PC-3 (cell line): ENCODE measurements at regions of chr1 and their contacts with region 1.

Region 1: DNA sequence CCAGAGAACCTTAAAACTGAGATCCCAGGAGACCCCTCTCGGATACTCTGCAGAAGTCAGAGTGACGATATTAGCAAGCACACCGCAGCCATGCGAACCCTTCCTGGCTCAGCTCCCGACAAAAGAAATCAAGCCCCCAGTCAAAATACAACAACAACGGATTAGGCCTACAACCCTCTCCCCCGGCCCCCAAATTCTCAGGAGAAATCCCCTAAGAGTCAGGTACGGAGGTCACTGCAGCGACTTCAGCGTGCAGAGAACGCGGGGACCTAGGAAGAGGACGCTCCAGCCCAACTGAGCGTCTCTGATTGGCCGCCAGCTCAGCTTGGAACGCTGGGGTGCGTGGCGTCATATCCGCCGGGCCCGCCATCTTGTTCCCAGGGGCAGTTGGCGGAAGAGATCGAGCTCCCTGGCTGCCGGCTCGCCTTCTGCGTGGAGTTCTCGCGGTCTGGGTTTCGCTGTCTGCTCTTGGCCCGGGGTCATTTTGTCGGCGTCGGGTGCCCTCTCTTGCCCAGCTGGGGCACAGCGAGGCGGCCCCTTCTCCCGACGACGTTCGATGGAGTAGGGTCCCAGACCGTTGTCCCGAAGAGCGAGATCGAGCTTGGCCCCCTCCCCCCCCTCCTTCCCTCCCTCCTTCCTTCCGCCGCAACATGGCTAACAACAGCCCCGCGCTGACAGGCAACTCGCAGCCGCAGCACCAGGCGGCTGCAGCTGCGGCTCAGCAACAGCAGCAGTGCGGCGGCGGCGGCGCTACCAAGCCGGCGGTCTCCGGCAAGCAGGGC is at the start of gene PRPF38B:
- DNase-seq: peak; percentile 90
- ATAC-seq: peak; percentile 93
- H3K4me3 ChIP-seq: peak within 1 kb of the TSS; percentile 100
- H3K27ac ChIP-seq: peak within 1 kb of the TSS; percentile 82
- H3K4me1 ChIP-seq: peaks cover 17% of the 10 kb centered on the region
- H3K27me3 ChIP-seq: no peaks in the 10 kb centered on the region
- CTCF ChIP-seq: no peak
- total RNA-seq, gene PRPF38B: 20.2 and 21.9 TPM in 2 replicates

Region 2: GRCh38 chr1:108199781-108200570 is 492.2 kb before region 1 on chr1 and contains the start of gene SLC25A24:
- CTCF ChIA-PET with region 1: no interaction called
- POLR2A ChIA-PET with region 1: no interaction called
- intact Hi-C with region 1: no loop called
- DNase-seq: peak; percentile 79
- ATAC-seq: peak; percentile 92
- H3K4me3 ChIP-seq: peak within 1 kb of the TSS; percentile 97
- H3K27ac ChIP-seq: peak within 1 kb of the TSS; percentile 59
- H3K4me1 ChIP-seq: peaks cover 19% of the 10 kb centered on the region
- H3K27me3 ChIP-seq: no peaks in the 10 kb centered on the region
- CTCF ChIP-seq: no peak
- total RNA-seq, gene SLC25A24: 30.3 and 33.4 TPM in 2 replicates

Region 3: GRCh38 chr1:108719656-108720435 is 27.7 kb after region 1 on chr1:
- CTCF ChIA-PET with region 1: no interaction called
- POLR2A ChIA-PET with region 1: no interaction called
- intact Hi-C with region 1: loop called (anchors 1 kb)
- DNase-seq: peak; percentile 89
- ATAC-seq: peak; percentile 98
- H3K4me3 ChIP-seq: peak overlapping the region; percentile 37; the same call in 1 of the 2 replicates
- H3K27ac ChIP-seq: peak overlapping the region; percentile 84
- H3K4me1 ChIP-seq: peaks cover 22% of the 10 kb centered on the region
- H3K27me3 ChIP-seq: no peaks in the 10 kb centered on the region
- CTCF ChIP-seq: no peak

Region 4: DNA sequence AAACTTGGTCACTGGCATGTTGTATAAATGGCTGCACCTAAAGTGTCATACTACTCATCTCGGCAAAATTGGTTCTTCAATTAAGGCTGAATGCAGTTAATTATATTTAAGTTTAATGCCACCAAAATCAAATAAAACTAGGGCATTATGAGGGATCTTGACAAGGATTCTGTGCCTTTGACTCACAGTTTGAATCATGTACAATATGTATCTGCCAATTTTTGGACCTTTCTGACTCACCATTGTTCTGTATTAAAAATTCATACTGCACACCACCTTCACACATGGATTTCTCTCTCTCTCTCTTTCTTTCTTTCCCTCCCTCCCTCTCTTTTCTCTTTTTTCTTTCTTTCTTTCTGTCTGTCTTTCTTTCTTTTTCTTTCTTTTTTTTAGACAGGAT is 40.3 kb after region 1 on chr1:
- CTCF ChIA-PET with region 1: no interaction called
- POLR2A ChIA-PET with region 1: no interaction called
- intact Hi-C with region 1: no loop called
- DNase-seq: peak; percentile 61
- ATAC-seq: peak; percentile 79
- H3K4me3 ChIP-seq: no peak overlapping the region
- H3K27ac ChIP-seq: no peak overlapping the region
- H3K4me1 ChIP-seq: no peaks in the 10 kb centered on the region
- H3K27me3 ChIP-seq: no peaks in the 10 kb centered on the region
- CTCF ChIP-seq: no peak

Region 5: DNA sequence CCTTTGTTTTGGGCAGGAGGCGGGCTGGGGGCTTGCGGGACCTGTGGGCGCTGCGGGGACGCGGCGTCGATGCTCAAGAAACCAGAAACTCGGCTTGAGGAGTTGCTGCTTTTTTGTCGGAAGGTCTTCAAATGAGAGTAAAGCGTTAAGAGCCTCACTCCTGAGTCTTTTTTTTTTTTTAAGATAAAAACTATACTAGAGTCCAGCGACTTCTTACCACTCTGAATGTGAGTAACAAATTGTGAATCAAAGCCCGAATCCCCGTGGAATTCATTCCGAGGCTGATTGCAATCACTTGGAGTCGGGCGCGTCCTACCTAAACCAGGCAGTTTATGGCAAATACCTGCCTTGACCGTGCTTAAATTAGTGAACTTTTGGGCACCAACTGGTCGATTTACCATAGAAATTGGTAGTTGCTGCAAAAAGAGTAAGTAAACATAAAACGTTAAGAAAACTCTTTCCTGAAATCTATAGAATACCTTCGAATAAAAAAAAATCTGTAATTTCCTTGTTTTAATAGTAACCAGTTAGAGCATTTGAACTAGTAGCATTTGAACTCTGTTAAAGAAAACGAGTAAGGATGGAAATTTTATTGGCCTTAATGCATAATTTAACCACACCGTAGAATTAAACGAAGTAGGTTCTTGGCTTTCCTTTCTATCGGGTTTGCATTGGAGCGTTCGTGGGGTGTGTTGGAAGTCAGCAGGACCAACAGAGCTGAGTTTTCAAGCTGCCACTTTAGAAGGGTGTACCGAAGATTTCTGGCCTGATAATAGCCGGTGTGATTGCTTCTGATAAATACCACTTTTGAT is 185.4 kb after region 1 on chr1:
- CTCF ChIA-PET with region 1: no interaction called
- POLR2A ChIA-PET with region 1: no interaction called
- intact Hi-C with region 1: loop called (anchors 5 kb)
- DNase-seq: peak; percentile 39
- ATAC-seq: peak; percentile 23
- H3K4me3 ChIP-seq: peak overlapping the region; percentile 87
- H3K27ac ChIP-seq: 0 out of 2 replicates have a peak overlapping the region, but pooled peaks have one; percentile 12
- H3K4me1 ChIP-seq: peaks cover 20% of the 10 kb centered on the region
- H3K27me3 ChIP-seq: no peaks in the 10 kb centered on the region
- CTCF ChIP-seq: no peak

Region 6: DNA sequence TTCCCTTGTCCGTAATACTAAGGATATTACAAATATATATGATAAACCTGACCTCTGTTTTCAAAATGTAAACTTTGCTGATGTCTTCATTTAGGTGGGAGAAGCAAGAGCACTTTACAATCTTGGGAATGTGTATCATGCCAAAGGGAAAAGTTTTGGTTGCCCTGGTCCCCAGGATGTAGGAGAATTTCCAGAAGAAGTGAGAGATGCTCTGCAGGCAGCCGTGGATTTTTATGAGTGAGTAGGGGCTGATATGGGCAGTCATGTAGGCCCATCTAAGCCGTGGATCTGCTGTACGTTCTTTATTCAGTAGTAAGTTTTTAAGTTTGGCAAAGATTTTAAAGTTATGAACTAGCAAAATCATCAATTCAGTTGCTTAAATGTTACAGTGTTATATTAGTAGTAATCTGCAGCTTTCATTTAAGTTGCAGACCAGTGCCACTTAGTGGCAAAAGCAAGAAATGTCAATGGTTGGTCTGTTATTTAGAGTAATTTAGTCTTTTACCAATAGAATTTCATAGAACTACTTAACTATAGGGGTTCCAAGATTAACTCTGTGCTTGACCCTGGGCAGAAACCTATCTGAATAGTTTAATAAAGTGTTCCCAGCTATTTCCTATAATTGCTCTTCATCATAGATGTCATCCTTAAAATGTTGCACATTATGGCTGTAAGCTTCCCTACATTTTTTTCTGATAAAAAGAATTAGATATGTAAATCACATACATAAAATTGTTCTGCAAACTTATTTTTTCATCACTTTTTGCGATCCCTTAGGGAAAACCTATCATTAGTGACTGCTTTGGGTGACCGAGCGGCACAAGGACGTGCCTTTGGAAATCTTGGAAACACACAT is 206.0 kb after region 1 on chr1:
- CTCF ChIA-PET with region 1: no interaction called
- POLR2A ChIA-PET with region 1: no interaction called
- intact Hi-C with region 1: loop called (anchors 5 kb)
- DNase-seq: peak; percentile 80
- ATAC-seq: peak; percentile 60
- H3K4me3 ChIP-seq: no peak overlapping the region
- H3K27ac ChIP-seq: no peak overlapping the region
- H3K4me1 ChIP-seq: peaks cover 14% of the 10 kb centered on the region
- H3K27me3 ChIP-seq: no peaks in the 10 kb centered on the region
- CTCF ChIP-seq: peak; percentile 84